Activated CD4-positive, alpha-beta T cell treated with anti-CD3 and anti-CD28 coated beads for 36 hours (primary cell): ENCODE measurements at regions of chr17 and their contacts with region 1.

Region 1: GRCh38 chr17:76053246-76054116 is 18.8 kb downstream of the SRP68 start:
- DNase-seq: peak; percentile 62
- ATAC-seq: peak; percentile 74
- H3K4me3 Mint-ChIP-seq: no peak overlapping the region
- H3K27ac Mint-ChIP-seq: peak overlapping the region; percentile 38
- H3K4me1 Mint-ChIP-seq: peaks cover 41% of the 10 kb centered on the region
- H3K27me3 Mint-ChIP-seq: no peaks in the 10 kb centered on the region

Region 2: GRCh38 chr17:76063875-76064546 is 10.5 kb after region 1 on chr17:
- CTCF ChIA-PET with region 1: interaction called, 15 read pairs
- POLR2A ChIA-PET with region 1: no interaction called
- intact Hi-C with region 1: no loop called
- DNase-seq: peak; percentile 81
- ATAC-seq: peak; percentile 91
- H3K4me3 Mint-ChIP-seq: peak overlapping the region; percentile 63
- H3K27ac Mint-ChIP-seq: peak overlapping the region; percentile 81
- H3K4me1 Mint-ChIP-seq: peaks cover 31% of the 10 kb centered on the region
- H3K27me3 Mint-ChIP-seq: no peaks in the 10 kb centered on the region